ENCODE measurements at regions of chr1 and their contacts with region 1.

Region 1: GRCh38 chr1:184465489-184466146 is 78.8 kb downstream of the C1orf21 start:
- DNase-seq: peak; percentile 16
- ATAC-seq: peak; percentile 87
- H3K4me3 Mint-ChIP-seq: no peak overlapping the region
- H3K27ac Mint-ChIP-seq: no peak overlapping the region
- H3K4me1 Mint-ChIP-seq: peaks cover 30% of the 10 kb centered on the region
- H3K27me3 Mint-ChIP-seq: no peaks in the 10 kb centered on the region
- CTCF ChIP-seq: no peak

Region 2: DNA sequence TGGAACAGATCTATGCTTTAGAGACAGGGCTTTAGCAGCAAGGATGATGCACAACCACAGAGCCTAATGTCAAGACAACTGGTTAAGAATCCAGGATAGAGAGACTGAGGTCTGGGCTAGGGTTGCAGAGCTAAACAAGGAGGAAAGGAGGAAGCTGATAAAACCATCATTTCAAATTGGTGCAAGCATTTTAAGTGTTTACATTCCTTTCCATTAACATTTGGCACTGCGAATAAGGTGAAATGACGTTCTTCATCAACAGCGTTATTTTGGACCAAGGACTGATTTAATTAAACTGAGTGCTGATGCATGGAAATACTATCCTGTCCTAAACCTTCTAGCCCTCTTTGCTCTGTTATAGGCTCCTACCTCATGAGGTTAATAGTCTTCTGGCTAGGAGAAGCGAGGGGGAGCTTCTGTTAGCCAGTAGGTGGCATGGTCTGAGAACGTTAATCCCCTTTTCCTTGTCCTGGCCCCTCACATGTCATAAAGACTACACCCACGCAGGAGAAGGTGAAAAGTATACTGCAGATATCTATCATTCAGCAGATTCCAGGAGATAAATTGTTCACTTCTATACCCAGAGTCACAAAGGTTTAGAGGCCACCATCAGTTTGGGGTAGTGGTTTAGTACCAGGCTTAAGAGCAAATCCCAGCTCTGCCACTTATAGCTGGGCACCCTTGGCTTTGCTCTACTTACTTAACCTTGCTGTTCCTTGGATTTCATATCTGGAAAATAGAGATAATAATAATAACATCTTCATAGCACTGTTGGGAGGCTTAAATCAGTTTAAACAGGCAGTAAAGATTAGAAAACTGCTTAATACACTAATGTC is 86.3 kb before region 1 on chr1:
- CTCF ChIA-PET with region 1: interaction called, 16 read pairs
- POLR2A ChIA-PET with region 1: no interaction called
- DNase-seq: no peak
- ATAC-seq: peak; percentile 83
- H3K4me3 Mint-ChIP-seq: no peak overlapping the region
- H3K27ac Mint-ChIP-seq: no peak overlapping the region
- H3K4me1 Mint-ChIP-seq: peaks cover 28% of the 10 kb centered on the region
- H3K27me3 Mint-ChIP-seq: no peaks in the 10 kb centered on the region
- CTCF ChIP-seq: no peak

Region 3: DNA sequence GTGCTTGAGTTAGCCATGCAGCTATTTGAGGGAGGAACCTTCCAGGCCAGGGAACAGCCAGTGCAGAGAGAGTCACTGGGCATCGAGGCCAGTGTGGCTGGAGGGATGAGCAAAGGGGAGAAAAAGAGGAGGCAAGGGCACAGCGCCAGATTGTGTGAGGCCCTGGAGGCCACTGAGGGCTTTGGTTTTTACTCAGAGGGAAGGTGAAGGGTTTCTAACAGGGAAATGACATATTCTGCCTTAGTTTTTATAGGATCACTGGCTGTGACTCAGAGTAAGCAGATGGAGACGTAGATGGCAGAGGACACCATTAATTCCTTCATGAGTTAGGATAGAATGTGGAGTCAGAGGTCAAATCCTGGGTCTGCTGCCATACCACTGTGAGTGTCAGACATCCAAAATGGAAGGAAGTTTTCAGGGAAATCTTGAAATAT is 45.9 kb before region 1 on chr1:
- CTCF ChIA-PET with region 1: no interaction called
- POLR2A ChIA-PET with region 1: no interaction called
- DNase-seq: no peak
- ATAC-seq: peak; percentile 32; the same call in 1 of the 2 replicates
- H3K4me3 Mint-ChIP-seq: no peak overlapping the region
- H3K27ac Mint-ChIP-seq: peak overlapping the region; percentile 1; the same call in 1 of the 2 replicates
- H3K4me1 Mint-ChIP-seq: peaks cover 49% of the 10 kb centered on the region
- H3K27me3 Mint-ChIP-seq: peaks cover 3% of the 10 kb centered on the region; the same call in 1 of the 2 replicates
- CTCF ChIP-seq: no peak

Region 4: DNA sequence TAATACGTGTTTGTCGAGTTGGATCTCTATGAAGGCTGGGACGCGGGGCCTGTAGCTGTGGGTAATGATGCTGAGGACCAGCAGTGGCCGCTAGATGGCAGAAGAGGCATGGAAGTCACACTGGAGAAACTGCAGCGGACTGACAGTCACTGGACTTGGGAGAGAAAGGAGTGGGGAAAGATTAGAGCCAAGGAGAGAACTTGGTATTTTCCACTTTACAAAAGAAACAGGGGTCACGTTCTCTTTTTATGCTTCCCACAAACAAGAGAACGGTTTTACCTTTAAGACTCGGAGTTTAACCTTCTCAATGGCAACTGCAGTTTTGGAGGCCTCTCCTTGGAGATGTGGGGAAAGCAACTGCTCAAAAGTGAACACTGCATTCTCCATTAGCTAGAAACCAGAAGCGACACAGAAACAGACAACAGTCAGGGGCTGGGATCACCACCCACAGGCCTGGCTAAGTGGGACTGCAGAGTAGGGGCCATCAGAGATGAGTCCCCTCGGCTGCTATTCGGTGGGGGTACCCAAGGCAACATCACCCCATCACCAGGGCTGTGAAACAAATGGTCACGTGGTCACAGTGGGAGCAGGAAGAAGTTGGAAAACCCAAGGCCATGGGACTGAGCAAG is 340.2 kb after region 1 on chr1:
- CTCF ChIA-PET with region 1: no interaction called
- POLR2A ChIA-PET with region 1: no interaction called
- DNase-seq: peak; percentile 86
- ATAC-seq: peak; percentile 98
- H3K4me3 Mint-ChIP-seq: no peak overlapping the region
- H3K27ac Mint-ChIP-seq: no peak overlapping the region
- H3K4me1 Mint-ChIP-seq: peaks cover 3% of the 10 kb centered on the region; the same call in 1 of the 2 replicates
- H3K27me3 Mint-ChIP-seq: no peaks in the 10 kb centered on the region
- CTCF ChIP-seq: peak; percentile 80